ENCODE measurements at regions of chr5 and their contacts with region 1.

Region 1: GRCh38 chr5:157743163-157744050 is at the start of gene LSM11:
- DNase-seq: peak; percentile 82 to 88 (median 83)
- H3K4me3 ChIP-seq: peak within 1 kb of the TSS; percentile 55 to 83 (median 58)
- H3K4me3 Mint-ChIP-seq: peak within 1 kb of the TSS; percentile 90 to 96
- H3K27ac ChIP-seq: peak within 1 kb of the TSS in 1 of 2 donors; percentile 11
- H3K27ac Mint-ChIP-seq: peak within 1 kb of the TSS; percentile 49 to 82 (median 65)
- H3K4me1 ChIP-seq: peaks cover 12 to 17% of the 10 kb centered on the region in 2 donors
- H3K4me1 Mint-ChIP-seq: peaks cover 18% of the 10 kb centered on the region
- H3K27me3 ChIP-seq: no peaks in the 10 kb centered on the region
- H3K27me3 Mint-ChIP-seq: peaks cover 4 to 6% (median 5%) of the 10 kb centered on the region in 3 donors
- CTCF ChIP-seq: peak; percentile 99
- polyA plus RNA-seq, gene LSM11: 0.28 to 1.3 (median 0.41) TPM

Region 2: GRCh38 chr5:157328277-157328912 is 415.0 kb before region 1 on chr5:
- intact Hi-C with region 1: loop called (anchors 5 to 10 kb)
- DNase-seq: peak; percentile 51 to 72 (median 52)
- H3K4me3 ChIP-seq: no peak overlapping the region
- H3K4me3 Mint-ChIP-seq: no peak overlapping the region
- H3K27ac ChIP-seq: peak overlapping the region in 1 of 2 donors; percentile 20
- H3K27ac Mint-ChIP-seq: peak overlapping the region in 1 of 7 donors; percentile 12
- H3K4me1 ChIP-seq: peaks cover 8 to 12% of the 10 kb centered on the region in 2 donors
- H3K4me1 Mint-ChIP-seq: peaks cover 9% of the 10 kb centered on the region
- H3K27me3 ChIP-seq: no peaks in the 10 kb centered on the region
- H3K27me3 Mint-ChIP-seq: no peaks in the 10 kb centered on the region
- CTCF ChIP-seq: peak; percentile 89

Region 3: GRCh38 chr5:157431544-157432200 is 311.7 kb before region 1 on chr5:
- intact Hi-C with region 1: loop called in 1 of 2 experiments (anchors 5 kb)
- DNase-seq: peak; percentile 56 to 75 (median 72)
- H3K4me3 ChIP-seq: no peak overlapping the region
- H3K4me3 Mint-ChIP-seq: no peak overlapping the region
- H3K27ac ChIP-seq: no peak overlapping the region
- H3K27ac Mint-ChIP-seq: peak overlapping the region in 2 of 7 donors; percentile 30 to 78
- H3K4me1 ChIP-seq: no peaks in the 10 kb centered on the region
- H3K4me1 Mint-ChIP-seq: peaks cover 5% of the 10 kb centered on the region
- H3K27me3 ChIP-seq: no peaks in the 10 kb centered on the region
- H3K27me3 Mint-ChIP-seq: peaks cover 2 to 6% (median 5%) of the 10 kb centered on the region in 3 donors
- CTCF ChIP-seq: peak; percentile 70

Region 4: GRCh38 chr5:157665467-157666100 is 77.8 kb before region 1 on chr5:
- intact Hi-C with region 1: loop called in 1 of 2 experiments (anchors 5 kb)
- DNase-seq: peak; percentile 84 to 97 (median 95)
- H3K4me3 ChIP-seq: no peak overlapping the region
- H3K4me3 Mint-ChIP-seq: peak overlapping the region in 1 of 2 donors; percentile 76
- H3K27ac ChIP-seq: peak overlapping the region in 1 of 2 donors; percentile 16
- H3K27ac Mint-ChIP-seq: peak overlapping the region; percentile 28 to 93 (median 83)
- H3K4me1 ChIP-seq: peaks cover 10 to 12% of the 10 kb centered on the region in 2 donors
- H3K4me1 Mint-ChIP-seq: peaks cover 18% of the 10 kb centered on the region
- H3K27me3 ChIP-seq: peaks cover 0 to 10% of the 10 kb centered on the region in 2 donors
- H3K27me3 Mint-ChIP-seq: peaks cover 14 to 26% (median 22%) of the 10 kb centered on the region in 3 donors
- CTCF ChIP-seq: no peak

Region 5: GRCh38 chr5:157858527-157859226 is 115.3 kb after region 1 on chr5 and contains the start of gene CLINT1:
- intact Hi-C with region 1: loop called in 1 of 2 experiments (anchors 10 kb)
- DNase-seq: peak; percentile 83 to 90 (median 89)
- H3K4me3 ChIP-seq: peak within 1 kb of the TSS; percentile 68 to 95 (median 72)
- H3K4me3 Mint-ChIP-seq: peak within 1 kb of the TSS; percentile 94 to 97
- H3K27ac ChIP-seq: peak within 1 kb of the TSS; percentile 87 to 92
- H3K27ac Mint-ChIP-seq: peak within 1 kb of the TSS; percentile 96 to 98 (median 98)
- H3K4me1 ChIP-seq: peaks cover 21 to 43% of the 10 kb centered on the region in 2 donors
- H3K4me1 Mint-ChIP-seq: peaks cover 40% of the 10 kb centered on the region
- H3K27me3 ChIP-seq: no peaks in the 10 kb centered on the region
- H3K27me3 Mint-ChIP-seq: peaks cover 0 to 2% (median 0%) of the 10 kb centered on the region in 3 donors
- CTCF ChIP-seq: no peak
- polyA plus RNA-seq, gene CLINT1: 67.4 to 100 (median 71.9) TPM

Measured in CD14-positive monocyte (primary cell).